ENCODE measurements at regions of chr16 and their contacts with region 1.

Region 1: DNA sequence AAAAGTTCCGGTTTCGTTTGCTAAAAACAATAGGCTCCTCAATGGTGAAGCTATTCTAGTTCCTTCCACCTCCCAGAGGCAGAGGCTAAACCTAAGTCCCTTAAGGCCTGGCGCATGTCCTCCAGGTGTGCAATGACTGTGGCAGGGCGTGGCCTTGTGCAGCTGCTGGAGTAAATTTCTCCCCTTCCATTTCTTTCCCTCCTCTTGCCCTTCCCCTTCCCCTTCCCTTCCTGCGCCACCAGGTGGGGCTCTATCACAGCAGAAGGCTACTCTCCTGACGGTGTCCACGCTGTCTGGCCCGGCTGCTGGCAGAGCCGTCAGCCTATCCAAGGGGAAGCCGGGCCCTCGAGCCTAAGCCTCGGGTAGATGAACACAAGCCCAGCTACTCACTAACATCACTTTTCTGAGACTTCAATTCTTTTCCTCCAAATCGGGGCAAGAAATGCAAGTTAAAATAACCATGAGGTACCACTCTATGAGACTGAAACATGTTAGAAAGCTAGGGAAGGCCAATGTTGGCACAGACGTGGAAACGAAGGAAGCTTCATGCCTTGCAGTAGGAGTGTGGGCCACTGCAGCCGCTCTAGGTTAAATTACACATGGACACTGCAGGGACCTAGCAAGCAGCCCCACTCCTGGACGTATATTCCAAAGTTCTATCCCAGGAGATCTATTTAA is 34.4 kb downstream of the C16orf78 start:
- DNase-seq: peak; percentile 78
- ATAC-seq: peak; percentile 99
- H3K4me3 ChIP-seq: no peak overlapping the region
- H3K27ac ChIP-seq: no peak overlapping the region
- H3K4me1 ChIP-seq: peaks cover 0 to 10% of the 10 kb centered on the region in 2 experiments; a peak in 2 of 4 replicates
- H3K27me3 ChIP-seq: 0 out of 2 replicates have a peak, but pooled peaks cover 2% of the 10 kb centered on the region
- CTCF ChIP-seq: peak; percentile 89 to 94 (median 90)
- POLR2A ChIP-seq: no peak
- RAD21 ChIP-seq: peak; percentile 98

Region 2: DNA sequence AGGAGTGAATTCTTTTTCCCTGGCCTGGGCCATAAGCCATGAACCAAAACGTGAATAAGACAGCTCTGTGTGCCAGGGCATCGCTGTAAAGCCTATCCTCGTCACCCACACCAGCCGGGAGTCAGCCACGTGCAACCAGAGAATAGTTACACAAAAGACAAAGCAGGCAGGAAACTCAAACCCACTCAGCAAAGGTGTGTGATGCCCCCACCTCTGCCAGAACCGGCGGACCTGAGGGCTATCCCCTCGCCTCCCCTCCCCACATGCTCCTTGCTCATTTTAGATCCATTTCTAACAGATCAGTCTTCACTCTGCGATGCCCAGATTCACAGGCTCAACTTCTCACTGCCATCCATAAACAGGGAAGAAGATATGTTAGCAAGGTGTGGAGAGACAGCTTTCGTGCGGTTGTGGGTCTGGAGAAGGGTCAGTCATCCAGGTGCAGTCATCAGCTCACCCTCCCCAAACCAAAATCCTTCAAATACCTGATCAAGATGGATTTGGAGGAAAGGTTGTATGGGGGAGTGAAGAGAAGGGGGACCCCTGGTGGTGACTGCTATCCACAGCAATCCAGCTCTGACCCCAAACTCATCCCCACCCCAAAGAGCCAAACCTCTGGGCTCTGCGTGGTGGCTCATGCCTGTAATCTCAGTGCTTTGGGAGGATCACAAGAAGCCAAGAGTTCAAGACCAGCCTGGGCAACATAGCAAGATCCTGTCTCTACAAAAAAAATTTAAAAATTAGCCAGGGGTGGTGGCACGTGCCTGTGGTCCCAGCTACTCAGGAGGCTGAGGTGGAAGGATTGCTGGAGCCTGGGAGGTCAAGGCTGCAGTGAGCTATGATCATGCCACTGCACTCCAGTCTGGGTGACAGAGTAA is 184.8 kb after region 1 on chr16:
- CTCF ChIA-PET with region 1: interaction called, 20 read pairs
- POLR2A ChIA-PET with region 1: no interaction called
- RAD21 ChIA-PET with region 1: interaction called in 1 of 2 experiments, 3 read pairs
- intact Hi-C with region 1: loop called (anchors 1 kb)
- DNase-seq: peak; percentile 12
- ATAC-seq: peak; percentile 93
- H3K4me3 ChIP-seq: no peak overlapping the region
- H3K27ac ChIP-seq: no peak overlapping the region
- H3K4me1 ChIP-seq: no peaks in the 10 kb centered on the region
- H3K27me3 ChIP-seq: peaks cover 23% of the 10 kb centered on the region; the same call in 1 of the 2 replicates
- CTCF ChIP-seq: peak; percentile 46 to 91 (median 82); a peak in 5 of 6 replicates
- POLR2A ChIP-seq: no peak
- RAD21 ChIP-seq: peak; percentile 57

Region 3: GRCh38 chr16:49855280-49855821 is 447.3 kb after region 1 on chr16:
- CTCF ChIA-PET with region 1: interaction called, 10 read pairs
- POLR2A ChIA-PET with region 1: no interaction called
- RAD21 ChIA-PET with region 1: no interaction called
- intact Hi-C with region 1: no loop called
- DNase-seq: no peak
- ATAC-seq: peak; percentile 57
- H3K4me3 ChIP-seq: peak overlapping the region; percentile 37 to 58
- H3K27ac ChIP-seq: no peak overlapping the region; the same call in 1 of the 2 replicates
- H3K4me1 ChIP-seq: peaks cover 8 to 26% of the 10 kb centered on the region in 2 experiments; a peak in 3 of 4 replicates
- H3K27me3 ChIP-seq: peaks cover 42% of the 10 kb centered on the region
- CTCF ChIP-seq: no peak
- POLR2A ChIP-seq: no peak
- RAD21 ChIP-seq: no peak

Measured in HCT116 (cell line).